ENCODE measurements at regions of chr1 and their contacts with region 1.

Region 1: GRCh38 chr1:171389171-171389570 is 75.2 kb downstream of the FMO4 start:
- DNase-seq: no peak
- H3K4me3 Mint-ChIP-seq: no peak overlapping the region
- H3K27ac Mint-ChIP-seq: no peak overlapping the region
- H3K4me1 Mint-ChIP-seq: no peaks in the 10 kb centered on the region
- H3K27me3 Mint-ChIP-seq: peaks cover 3% of the 10 kb centered on the region

Region 2: DNA sequence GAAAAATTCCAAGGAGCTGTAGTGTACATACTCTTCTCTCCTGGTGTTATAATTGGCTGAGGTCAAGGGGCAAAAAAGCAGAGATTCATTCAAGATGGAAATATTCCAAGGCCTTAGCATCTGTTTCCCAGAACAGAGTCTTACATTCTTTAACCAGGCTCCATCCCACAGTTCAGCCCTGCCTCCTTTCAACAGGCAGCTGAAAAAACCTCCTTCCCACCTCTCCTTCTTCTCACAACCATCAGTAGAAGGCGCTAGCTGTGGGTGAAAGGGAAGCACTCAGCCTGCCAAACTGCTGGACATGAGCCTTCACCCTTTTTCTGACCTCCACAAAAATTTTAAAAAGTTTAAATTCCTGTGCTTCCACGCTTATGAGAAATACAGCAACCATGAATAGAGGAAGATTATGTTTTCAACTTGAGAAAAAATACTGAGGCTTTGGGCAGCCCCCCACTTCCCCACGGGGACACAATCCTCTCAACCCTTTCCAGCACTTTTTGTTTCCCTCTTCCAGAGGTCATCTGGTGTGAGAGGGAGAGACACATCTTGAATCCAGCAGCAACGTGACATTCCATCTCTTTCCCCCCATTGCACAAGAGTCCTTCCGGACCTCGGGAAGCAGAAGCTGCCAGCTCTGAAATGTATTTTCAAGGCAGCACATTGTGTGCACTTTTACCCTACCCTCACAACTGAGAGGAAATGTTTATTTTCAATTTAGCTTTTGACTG is 247.3 kb before region 1 on chr1:
- CTCF ChIA-PET with region 1: no interaction called
- intact Hi-C with region 1: no loop called
- DNase-seq: no peak
- H3K4me3 Mint-ChIP-seq: no peak overlapping the region
- H3K27ac Mint-ChIP-seq: no peak overlapping the region
- H3K4me1 Mint-ChIP-seq: no peaks in the 10 kb centered on the region
- H3K27me3 Mint-ChIP-seq: peaks cover 14% of the 10 kb centered on the region

Region 3: DNA sequence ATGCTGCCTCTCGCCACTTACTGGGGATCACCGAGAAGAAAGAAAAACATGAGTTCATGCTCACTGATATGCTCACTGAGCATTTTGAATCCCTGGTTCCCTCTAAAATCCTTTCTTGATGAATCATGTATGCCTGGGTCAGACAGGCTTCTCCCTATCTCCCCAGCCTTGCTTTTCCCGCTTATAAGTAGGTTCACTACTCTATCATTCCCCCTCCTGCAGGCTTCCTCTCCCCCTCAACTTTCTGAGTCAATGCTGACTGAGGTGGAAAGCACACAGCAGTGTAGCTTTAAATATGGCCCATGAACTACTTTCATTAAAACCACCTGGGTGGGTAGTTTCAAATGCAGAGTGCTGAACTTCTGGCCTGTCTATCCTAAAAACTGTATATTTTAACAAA is 33.4 kb before region 1 on chr1:
- CTCF ChIA-PET with region 1: no interaction called
- intact Hi-C with region 1: no loop called
- DNase-seq: no peak
- H3K4me3 Mint-ChIP-seq: no peak overlapping the region
- H3K27ac Mint-ChIP-seq: no peak overlapping the region
- H3K4me1 Mint-ChIP-seq: no peaks in the 10 kb centered on the region
- H3K27me3 Mint-ChIP-seq: peaks cover 10% of the 10 kb centered on the region

Region 4: GRCh38 chr1:171441278-171441677 is 52.1 kb after region 1 on chr1:
- CTCF ChIA-PET with region 1: no interaction called
- intact Hi-C with region 1: loop called (anchors 10 kb)
- DNase-seq: no peak
- H3K4me3 Mint-ChIP-seq: no peak overlapping the region
- H3K27ac Mint-ChIP-seq: no peak overlapping the region
- H3K4me1 Mint-ChIP-seq: no peaks in the 10 kb centered on the region
- H3K27me3 Mint-ChIP-seq: no peaks in the 10 kb centered on the region

Region 5: GRCh38 chr1:171501305-171502024 is 112.3 kb after region 1 on chr1:
- CTCF ChIA-PET with region 1: no interaction called
- intact Hi-C with region 1: no loop called
- DNase-seq: no peak
- H3K4me3 Mint-ChIP-seq: no peak overlapping the region
- H3K27ac Mint-ChIP-seq: peak overlapping the region; percentile 71
- H3K4me1 Mint-ChIP-seq: peaks cover 87% of the 10 kb centered on the region
- H3K27me3 Mint-ChIP-seq: no peaks in the 10 kb centered on the region

Measured in activated naive CD4-positive, alpha-beta T cell treated with anti-CD3 and anti-CD28 coated beads for 36 hours (primary cell).